Activated B cell treated with CpG ODN at 0.5 μM for 24 hours (primary cell): ENCODE measurements at regions of chr1 and their contacts with region 1.

Region 1: GRCh38 chr1:16038620-16038912 is 5.0 kb upstream of the CLCNKB start:
- DNase-seq: no peak
- ATAC-seq: no peak
- H3K4me3 Mint-ChIP-seq: no peak overlapping the region
- H3K27ac Mint-ChIP-seq: no peak overlapping the region
- H3K4me1 Mint-ChIP-seq: no peaks in the 10 kb centered on the region
- H3K27me3 Mint-ChIP-seq: peaks cover 14% of the 10 kb centered on the region
- CTCF ChIP-seq: no peak

Region 2: GRCh38 chr1:16021681-16022080 is 16.9 kb before region 1 on chr1 and contains the start of gene CLCNKA:
- CTCF ChIA-PET with region 1: no interaction called
- POLR2A ChIA-PET with region 1: no interaction called
- intact Hi-C with region 1: loop called (anchors 1 kb)
- DNase-seq: no peak
- ATAC-seq: no peak
- H3K4me3 Mint-ChIP-seq: no peak within 1 kb of the TSS
- H3K27ac Mint-ChIP-seq: no peak within 1 kb of the TSS
- H3K4me1 Mint-ChIP-seq: no peaks in the 10 kb centered on the region
- H3K27me3 Mint-ChIP-seq: peaks cover 7% of the 10 kb centered on the region
- CTCF ChIP-seq: no peak
- total RNA-seq, gene CLCNKA: 0.24 TPM in 1 of 2 replicates, not detected in the other

Region 3: DNA sequence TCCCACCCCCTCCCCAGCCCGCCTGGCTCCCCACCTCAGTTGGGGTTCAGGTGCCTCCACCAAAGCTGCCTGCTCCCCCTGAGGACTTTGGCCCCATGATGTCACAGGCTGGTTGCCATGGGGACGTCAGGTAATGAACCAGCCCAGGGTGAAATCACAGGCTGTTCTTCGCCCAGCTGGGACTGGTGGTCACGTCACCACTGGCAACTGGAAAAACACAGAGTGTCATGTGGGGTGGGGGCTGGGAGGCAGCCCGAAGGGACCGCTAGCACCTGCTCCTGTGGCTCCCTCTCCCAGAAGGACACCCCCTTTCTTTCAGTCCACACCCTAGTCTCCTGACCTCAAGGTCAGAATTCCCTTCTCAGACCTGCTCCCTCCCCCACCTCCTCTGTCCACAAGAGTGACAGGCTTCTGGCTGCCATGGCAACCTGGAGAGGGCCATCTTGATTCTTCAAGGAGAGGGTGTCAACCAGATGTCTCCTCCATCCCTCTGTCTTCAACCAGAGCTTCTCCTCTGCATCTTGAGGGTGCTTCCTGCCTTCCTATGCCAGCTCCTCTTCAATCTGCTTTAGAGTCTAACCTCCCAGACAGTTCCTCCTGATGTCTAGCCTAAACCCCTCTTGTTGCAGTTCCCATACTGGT is 28.7 kb after region 1 on chr1:
- CTCF ChIA-PET with region 1: no interaction called
- POLR2A ChIA-PET with region 1: no interaction called
- intact Hi-C with region 1: loop called (anchors 1 kb)
- DNase-seq: no peak
- ATAC-seq: no peak
- H3K4me3 Mint-ChIP-seq: no peak overlapping the region
- H3K27ac Mint-ChIP-seq: no peak overlapping the region
- H3K4me1 Mint-ChIP-seq: peaks cover 2% of the 10 kb centered on the region
- H3K27me3 Mint-ChIP-seq: peaks cover 26% of the 10 kb centered on the region
- CTCF ChIP-seq: no peak